Activated CD8-positive, alpha-beta T cell treated with anti-CD3 and anti-CD28 coated beads for 36 hours (primary cell): ENCODE measurements at regions of chr6 and their contacts with region 1.

Region 1: DNA sequence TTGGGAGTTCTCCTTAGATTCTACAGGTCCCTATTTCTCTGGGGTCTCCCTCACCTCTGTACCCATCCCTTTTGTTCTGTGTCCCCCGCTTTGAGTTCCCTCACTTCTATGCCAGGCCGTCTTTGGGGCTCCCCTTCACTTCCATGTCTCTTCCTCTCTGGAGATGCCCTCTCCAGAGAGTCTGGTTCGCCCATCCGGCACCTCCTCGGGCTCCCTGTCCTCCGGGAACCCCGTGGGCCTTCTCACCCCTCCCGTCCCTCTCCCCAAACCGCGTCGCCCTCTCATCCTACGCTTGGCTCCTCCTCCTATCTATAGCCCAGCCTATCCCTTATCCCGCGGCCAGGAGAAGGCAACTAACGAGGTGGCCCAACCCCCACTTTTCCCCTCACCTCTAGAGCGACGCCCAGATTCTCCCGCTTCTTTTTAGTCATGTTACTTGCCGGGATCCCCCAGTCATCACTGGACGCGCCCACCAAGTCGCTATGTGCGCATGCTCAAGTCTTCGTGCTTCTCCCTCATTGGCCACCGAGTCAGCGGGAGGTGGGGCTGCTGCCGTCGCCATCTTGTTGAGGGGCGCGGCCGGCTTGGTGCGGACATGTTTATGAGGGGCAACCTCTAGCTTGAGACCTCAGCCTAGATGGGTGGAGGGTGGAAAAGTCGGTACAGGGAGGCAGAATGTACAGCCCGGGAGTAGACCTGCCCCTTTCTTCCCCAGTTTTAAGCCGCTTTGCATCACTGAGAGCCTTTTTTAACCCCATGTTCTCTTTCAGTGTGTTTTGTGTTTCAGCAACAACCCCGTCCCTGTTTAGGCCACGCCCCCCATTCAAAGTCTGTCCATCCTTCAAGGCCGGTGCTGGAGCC is at the start of gene CCDC167:
- DNase-seq: peak; percentile 99
- ATAC-seq: peak; percentile 86
- H3K4me3 Mint-ChIP-seq: peak within 1 kb of the TSS; percentile 92
- H3K27ac Mint-ChIP-seq: peak within 1 kb of the TSS; percentile 99
- H3K4me1 Mint-ChIP-seq: peaks cover 87% of the 10 kb centered on the region
- H3K27me3 Mint-ChIP-seq: no peaks in the 10 kb centered on the region
- CTCF ChIP-seq: no peak
- total RNA-seq, gene CCDC167: 63.7 to 68.1 TPM

Region 2: DNA sequence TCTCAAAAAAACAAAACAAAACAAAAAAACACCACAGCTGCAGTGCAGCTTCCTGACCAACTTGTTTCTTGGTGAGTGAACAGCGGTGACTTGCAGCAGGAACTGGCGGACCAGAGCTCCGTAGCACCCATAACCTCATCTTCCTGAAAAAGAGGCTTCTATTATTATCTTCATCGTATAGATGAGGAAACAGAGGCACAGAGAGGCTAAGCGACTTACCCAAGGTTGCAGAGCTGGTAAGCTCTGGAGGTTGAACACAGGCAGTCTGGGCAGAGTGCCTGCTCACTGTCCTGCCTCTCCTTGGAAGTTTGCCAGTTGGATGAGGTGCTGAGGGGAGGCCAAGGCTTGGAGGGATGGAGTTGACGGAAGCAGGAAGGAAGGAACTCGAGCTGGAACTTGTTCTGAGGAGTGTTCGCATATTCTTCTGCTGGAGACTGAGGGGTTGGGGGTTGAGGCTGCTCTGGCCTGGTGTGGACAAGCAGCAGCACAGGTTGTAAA is 48.0 kb after region 1 on chr6:
- CTCF ChIA-PET with region 1: no interaction called
- POLR2A ChIA-PET with region 1: interaction called, 4 read pairs
- intact Hi-C with region 1: loop called (anchors 5 kb)
- DNase-seq: no peak
- ATAC-seq: peak; percentile 53
- H3K4me3 Mint-ChIP-seq: no peak overlapping the region
- H3K27ac Mint-ChIP-seq: no peak overlapping the region
- H3K4me1 Mint-ChIP-seq: peaks cover 34% of the 10 kb centered on the region
- H3K27me3 Mint-ChIP-seq: no peaks in the 10 kb centered on the region
- CTCF ChIP-seq: no peak